HepG2 (cell line): ENCODE measurements at regions of chr21 and their contacts with region 1.

Region 1: GRCh38 chr21:42878993-42879787 is at the start of gene WDR4:
- DNase-seq: peak; percentile 93
- ATAC-seq: peak; percentile 97
- H3K4me3 ChIP-seq: peak within 1 kb of the TSS; percentile 60 to 93 (median 87)
- H3K27ac ChIP-seq: peak within 1 kb of the TSS; percentile 89
- H3K4me1 ChIP-seq: peaks cover 26% of the 10 kb centered on the region
- H3K27me3 ChIP-seq: no peaks in the 10 kb centered on the region; a peak in 1 of 5 replicates
- CTCF ChIP-seq: peak; percentile 13; the same call in 1 of the 2 replicates
- EP300 ChIP-seq: no peak
- POLR2A ChIP-seq: peak; percentile 97 to 99
- RAD21 ChIP-seq: peak; percentile 55
- total RNA-seq, gene WDR4: 14.4 and 14.8 TPM in 2 replicates

Region 2: GRCh38 chr21:42892931-42893755 is 14.0 kb after region 1 on chr21 and contains the start of gene NDUFV3:
- CTCF ChIA-PET with region 1: no interaction called
- POLR2A ChIA-PET with region 1: interaction called, 26 read pairs
- in situ Hi-C with region 1: no loop called
- intact Hi-C with region 1: loop called (anchors 1 kb)
- DNase-seq: peak; percentile 96
- ATAC-seq: peak; percentile 96
- H3K4me3 ChIP-seq: peak within 1 kb of the TSS; percentile 89 to 99 (median 94)
- H3K27ac ChIP-seq: peak within 1 kb of the TSS; percentile 88
- H3K4me1 ChIP-seq: peaks cover 18% of the 10 kb centered on the region
- H3K27me3 ChIP-seq: no peaks in the 10 kb centered on the region; a peak in 1 of 5 replicates
- CTCF ChIP-seq: peak; percentile 21; the same call in 1 of the 2 replicates
- EP300 ChIP-seq: no peak
- POLR2A ChIP-seq: peak; percentile 90 to 93
- RAD21 ChIP-seq: peak; percentile 50
- total RNA-seq, gene NDUFV3: 29.6 and 35.7 TPM in 2 replicates